OCI-LY7 (cell line): ENCODE measurements at regions of chr3 and their contacts with region 1.

Region 1: GRCh38 chr3:171622126-171622525 is 161.9 kb upstream of the TNIK start:
- DNase-seq: no peak
- H3K4me3 ChIP-seq: no peak overlapping the region
- H3K27ac ChIP-seq: no peak overlapping the region
- H3K4me1 ChIP-seq: no peaks in the 10 kb centered on the region
- CTCF ChIP-seq: no peak

Region 2: DNA sequence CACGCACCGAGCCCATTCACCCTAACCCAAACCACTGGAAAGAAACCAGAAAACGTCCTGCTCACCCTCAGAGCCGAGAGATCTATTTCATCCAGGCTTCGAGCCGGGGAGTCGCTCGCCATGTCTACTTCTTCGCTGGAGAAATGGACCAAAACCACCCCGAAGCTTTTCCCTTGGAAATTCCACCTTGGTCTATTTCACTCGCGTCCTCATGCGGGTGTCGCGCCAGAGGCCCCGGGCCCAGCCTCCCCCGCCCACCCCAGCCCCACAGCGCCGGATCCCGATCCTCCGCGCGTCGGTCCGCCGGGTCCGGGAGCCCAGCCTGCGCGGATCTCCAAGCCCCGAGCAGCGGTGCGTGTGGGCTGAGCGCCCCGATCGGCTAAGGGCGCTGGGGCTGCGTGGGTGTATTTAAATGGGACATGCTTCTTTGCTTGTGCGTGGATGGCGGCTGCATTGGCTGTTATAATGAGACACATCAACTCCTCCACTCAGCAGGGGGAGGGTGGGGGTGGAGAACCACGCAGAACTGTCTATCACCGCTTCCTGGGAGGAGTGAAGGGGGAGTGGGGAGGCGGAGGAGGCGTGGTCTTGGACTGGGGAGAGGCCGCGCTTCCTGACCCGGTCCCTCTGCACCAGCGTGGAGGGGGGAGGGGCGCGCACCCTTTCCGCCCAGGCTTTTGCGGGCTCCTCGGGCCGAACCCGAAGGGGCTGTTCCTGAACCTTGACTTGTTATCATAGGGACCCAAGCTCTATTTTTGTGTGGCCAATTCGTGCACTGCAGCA is 162.0 kb before region 1 on chr3 and contains the start of gene TNIK:
- CTCF ChIA-PET with region 1: no interaction called
- POLR2A ChIA-PET with region 1: no interaction called
- intact Hi-C with region 1: no loop called
- DNase-seq: no peak
- H3K4me3 ChIP-seq: no peak within 1 kb of the TSS
- H3K27ac ChIP-seq: no peak within 1 kb of the TSS
- H3K4me1 ChIP-seq: no peaks in the 10 kb centered on the region
- CTCF ChIP-seq: no peak
- total RNA-seq, gene TNIK: not detected in 2 replicates

Region 3: GRCh38 chr3:171822431-171823106 is 200.4 kb after region 1 on chr3:
- CTCF ChIA-PET with region 1: no interaction called
- POLR2A ChIA-PET with region 1: interaction called, 10 read pairs
- intact Hi-C with region 1: no loop called
- DNase-seq: no peak
- H3K4me3 ChIP-seq: no peak overlapping the region
- H3K27ac ChIP-seq: no peak overlapping the region
- H3K4me1 ChIP-seq: no peaks in the 10 kb centered on the region
- CTCF ChIP-seq: no peak